ENCODE measurements at regions of chr1 and their contacts with region 1.

Region 1: DNA sequence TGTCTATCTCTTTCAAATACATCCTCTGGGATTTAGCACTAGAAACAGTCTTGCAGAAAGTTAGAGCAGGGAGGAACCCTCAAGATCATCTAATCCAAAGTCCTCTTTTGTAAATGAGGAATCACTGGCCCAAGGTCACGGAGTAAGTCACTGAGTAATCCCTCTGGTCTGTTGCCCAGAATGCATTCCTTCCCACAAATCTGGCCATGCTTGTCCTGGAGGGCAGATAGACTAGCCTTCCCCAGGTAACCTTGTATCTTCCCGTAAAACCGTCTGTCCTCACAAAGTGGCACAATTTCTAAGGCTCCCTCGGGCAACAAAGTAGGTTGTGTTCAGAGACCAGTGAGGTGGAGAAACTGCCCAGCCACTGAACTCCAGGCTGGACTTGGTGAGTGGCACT is 46.2 kb downstream of the DDR2 start:
- DNase-seq: no peak
- ATAC-seq: no peak
- H3K4me3 ChIP-seq: no peak overlapping the region
- H3K27ac ChIP-seq: no peak overlapping the region
- H3K4me1 ChIP-seq: peaks cover 8% of the 10 kb centered on the region
- H3K27me3 ChIP-seq: no peaks in the 10 kb centered on the region
- CTCF ChIP-seq: no peak
- EP300 ChIP-seq: no peak
- POLR2A ChIP-seq: no peak
- RAD21 ChIP-seq: no peak

Region 2: GRCh38 chr1:162663589-162664106 is 14.8 kb before region 1 on chr1:
- CTCF ChIA-PET with region 1: interaction called, 12 read pairs
- POLR2A ChIA-PET with region 1: interaction called, 5 read pairs
- RAD21 ChIA-PET with region 1: interaction called, 4 read pairs
- SMC1A ChIA-PET with region 1: interaction called, 6 read pairs
- in situ Hi-C with region 1: no loop called
- intact Hi-C with region 1: no loop called
- DNase-seq: no peak
- ATAC-seq: peak; percentile 83
- H3K4me3 ChIP-seq: no peak overlapping the region
- H3K27ac ChIP-seq: peak overlapping the region; percentile 13
- H3K4me1 ChIP-seq: peaks cover 6% of the 10 kb centered on the region
- H3K27me3 ChIP-seq: no peaks in the 10 kb centered on the region
- CTCF ChIP-seq: no peak
- EP300 ChIP-seq: no peak
- POLR2A ChIP-seq: no peak
- RAD21 ChIP-seq: no peak